HepG2 (cell line): ENCODE measurements at regions of chr1 and their contacts with region 1.

Region 1: DNA sequence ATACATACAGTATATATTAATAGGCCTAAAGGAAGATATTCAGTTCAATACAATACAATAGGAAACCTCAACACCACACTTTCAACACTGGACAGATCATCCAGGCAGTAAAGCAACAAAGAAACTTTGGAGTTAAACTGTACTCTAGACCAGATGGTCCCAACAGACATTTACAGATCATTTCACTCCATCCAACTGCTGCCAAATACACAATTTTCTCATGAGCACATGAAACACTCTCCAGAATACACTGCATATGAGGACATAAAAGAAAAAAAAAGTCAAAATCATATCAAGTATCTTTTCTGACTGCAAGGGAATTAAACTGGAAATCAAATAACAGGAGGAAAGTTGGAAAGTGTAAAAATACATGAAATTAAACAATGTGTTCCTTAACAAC is 607.5 kb upstream of the BRINP3 start:
- DNase-seq: no peak
- ATAC-seq: no peak
- H3K4me3 ChIP-seq: no peak overlapping the region
- H3K27ac ChIP-seq: no peak overlapping the region
- H3K4me1 ChIP-seq: no peaks in the 10 kb centered on the region
- H3K27me3 ChIP-seq: no peaks in the 10 kb centered on the region
- CTCF ChIP-seq: no peak
- EP300 ChIP-seq: no peak
- POLR2A ChIP-seq: no peak
- RAD21 ChIP-seq: no peak

Region 2: DNA sequence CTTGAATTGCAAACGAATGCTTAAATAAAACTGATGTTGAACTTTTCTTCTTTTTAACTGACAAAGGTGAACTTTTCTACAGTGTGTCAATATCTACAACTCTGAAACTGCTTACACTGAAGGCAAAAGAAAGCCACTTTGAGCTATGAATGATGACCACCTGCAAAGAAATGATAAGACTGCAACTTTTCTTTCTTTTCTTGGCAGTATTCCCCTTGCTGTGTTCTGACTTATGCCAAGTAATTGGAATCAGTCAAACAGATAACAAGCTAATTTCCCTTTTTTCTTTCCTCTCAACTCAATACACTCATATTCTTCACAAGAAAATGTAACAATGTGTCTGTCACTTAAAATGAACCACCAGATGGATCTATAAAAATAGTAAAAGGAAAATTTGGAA is 19.4 kb before region 1 on chr1:
- CTCF ChIA-PET with region 1: no interaction called
- POLR2A ChIA-PET with region 1: no interaction called
- in situ Hi-C with region 1: no loop called
- intact Hi-C with region 1: no loop called
- DNase-seq: no peak
- ATAC-seq: no peak
- H3K4me3 ChIP-seq: no peak overlapping the region
- H3K27ac ChIP-seq: no peak overlapping the region
- H3K4me1 ChIP-seq: no peaks in the 10 kb centered on the region
- H3K27me3 ChIP-seq: no peaks in the 10 kb centered on the region
- CTCF ChIP-seq: no peak
- EP300 ChIP-seq: no peak
- POLR2A ChIP-seq: no peak
- RAD21 ChIP-seq: no peak

Region 3: DNA sequence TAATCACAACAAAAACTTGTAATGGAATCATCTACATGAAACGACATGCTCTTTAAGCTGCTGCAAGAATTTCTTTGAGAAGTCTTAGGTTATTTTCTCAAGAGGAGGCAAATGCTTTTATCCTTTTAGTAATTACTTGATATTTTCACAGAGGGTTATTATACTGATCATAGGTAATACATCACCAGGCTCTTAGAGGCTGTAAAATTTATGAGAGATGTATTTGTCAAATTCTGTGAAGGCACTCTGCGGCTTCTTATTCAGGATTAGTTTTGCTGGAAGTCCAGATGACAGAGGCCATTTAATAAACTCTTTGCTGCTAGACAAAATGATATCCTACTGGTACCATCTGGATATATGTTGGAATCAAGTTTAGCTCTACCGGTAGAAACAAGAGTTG is 16.8 kb after region 1 on chr1:
- CTCF ChIA-PET with region 1: no interaction called
- POLR2A ChIA-PET with region 1: no interaction called
- in situ Hi-C with region 1: no loop called
- intact Hi-C with region 1: loop called (anchors 2 kb)
- DNase-seq: no peak
- ATAC-seq: no peak
- H3K4me3 ChIP-seq: no peak overlapping the region
- H3K27ac ChIP-seq: no peak overlapping the region
- H3K4me1 ChIP-seq: no peaks in the 10 kb centered on the region
- H3K27me3 ChIP-seq: no peaks in the 10 kb centered on the region; a peak in 1 of 5 replicates
- CTCF ChIP-seq: no peak
- EP300 ChIP-seq: no peak
- POLR2A ChIP-seq: no peak
- RAD21 ChIP-seq: no peak